Spleen (tissue), 13 donors: ENCODE measurements at regions of chr7 and their contacts with region 1.

Region 1: DNA sequence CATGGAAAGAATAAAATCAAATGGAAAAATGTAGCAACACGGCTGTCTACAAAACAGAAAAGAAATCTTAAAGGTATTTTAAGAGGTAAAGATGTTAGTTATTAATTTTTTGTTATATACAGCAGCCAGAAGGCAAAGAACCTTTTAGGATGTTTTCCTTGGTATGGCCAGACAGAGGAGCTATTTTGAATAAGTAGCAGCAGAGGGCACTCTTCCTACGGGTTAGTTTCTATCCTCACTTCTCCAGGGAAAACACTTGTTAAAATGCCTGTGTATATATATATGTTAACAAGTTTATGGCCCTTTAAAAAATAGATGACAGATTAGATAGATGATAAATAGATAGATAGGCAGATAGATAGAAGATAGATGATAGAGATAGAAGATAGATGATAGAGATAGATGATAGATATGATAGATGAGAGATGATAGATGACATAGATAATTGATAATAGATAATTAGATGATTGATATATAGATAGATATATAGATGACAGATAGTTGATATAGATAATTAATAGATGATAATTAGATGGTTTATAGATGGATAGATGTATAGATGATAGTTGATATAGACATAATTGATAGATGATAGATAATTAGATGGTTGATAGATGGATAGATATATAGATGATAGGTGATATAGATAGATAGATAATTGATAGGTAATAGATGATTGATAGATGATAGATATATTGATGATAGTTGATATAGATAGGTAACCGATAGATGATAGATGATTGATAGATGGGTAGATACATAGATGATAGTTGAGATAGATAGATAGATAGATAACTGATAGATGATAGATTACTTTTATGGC is 57.8 kb upstream of the WIPF3 start:
- DNase-seq: no peak
- H3K4me3 ChIP-seq: no peak overlapping the region
- H3K27ac ChIP-seq: peak overlapping the region in 1 of 8 donors; percentile 11
- H3K4me1 ChIP-seq: peaks cover 0 to 4% (median 0%) of the 10 kb centered on the region in 6 donors
- H3K27me3 ChIP-seq: peaks cover 0 to 4% (median 0%) of the 10 kb centered on the region in 7 donors
- CTCF ChIP-seq: peak in 7 of 11 experiments; percentile 23 to 59 (median 43)
- POLR2A ChIP-seq: no peak

Region 2: GRCh38 chr7:29649028-29649716 is 99.3 kb before region 1 on chr7:
- intact Hi-C with region 1: loop called (anchors 2 kb)
- DNase-seq: no peak
- H3K4me3 ChIP-seq: no peak overlapping the region
- H3K27ac ChIP-seq: no peak overlapping the region
- H3K4me1 ChIP-seq: no peaks in the 10 kb centered on the region
- H3K27me3 ChIP-seq: no peaks in the 10 kb centered on the region
- CTCF ChIP-seq: no peak
- POLR2A ChIP-seq: no peak

Region 3: GRCh38 chr7:29894256-29894655 is 145.8 kb after region 1 on chr7:
- intact Hi-C with region 1: no loop called
- DNase-seq: no peak
- H3K4me3 ChIP-seq: no peak overlapping the region
- H3K27ac ChIP-seq: no peak overlapping the region
- H3K4me1 ChIP-seq: no peaks in the 10 kb centered on the region
- H3K27me3 ChIP-seq: peaks cover 0 to 13% (median 0%) of the 10 kb centered on the region in 7 donors
- CTCF ChIP-seq: no peak
- POLR2A ChIP-seq: no peak

Region 4: GRCh38 chr7:29921404-29922010 is 173.0 kb after region 1 on chr7:
- intact Hi-C with region 1: loop called (anchors 10 kb)
- DNase-seq: no peak
- H3K4me3 ChIP-seq: no peak overlapping the region
- H3K27ac ChIP-seq: no peak overlapping the region
- H3K4me1 ChIP-seq: no peaks in the 10 kb centered on the region
- H3K27me3 ChIP-seq: peaks cover 0 to 2% (median 0%) of the 10 kb centered on the region in 7 donors
- CTCF ChIP-seq: peak in 10 of 11 experiments; percentile 60 to 87 (median 83)
- POLR2A ChIP-seq: no peak

Region 5: DNA sequence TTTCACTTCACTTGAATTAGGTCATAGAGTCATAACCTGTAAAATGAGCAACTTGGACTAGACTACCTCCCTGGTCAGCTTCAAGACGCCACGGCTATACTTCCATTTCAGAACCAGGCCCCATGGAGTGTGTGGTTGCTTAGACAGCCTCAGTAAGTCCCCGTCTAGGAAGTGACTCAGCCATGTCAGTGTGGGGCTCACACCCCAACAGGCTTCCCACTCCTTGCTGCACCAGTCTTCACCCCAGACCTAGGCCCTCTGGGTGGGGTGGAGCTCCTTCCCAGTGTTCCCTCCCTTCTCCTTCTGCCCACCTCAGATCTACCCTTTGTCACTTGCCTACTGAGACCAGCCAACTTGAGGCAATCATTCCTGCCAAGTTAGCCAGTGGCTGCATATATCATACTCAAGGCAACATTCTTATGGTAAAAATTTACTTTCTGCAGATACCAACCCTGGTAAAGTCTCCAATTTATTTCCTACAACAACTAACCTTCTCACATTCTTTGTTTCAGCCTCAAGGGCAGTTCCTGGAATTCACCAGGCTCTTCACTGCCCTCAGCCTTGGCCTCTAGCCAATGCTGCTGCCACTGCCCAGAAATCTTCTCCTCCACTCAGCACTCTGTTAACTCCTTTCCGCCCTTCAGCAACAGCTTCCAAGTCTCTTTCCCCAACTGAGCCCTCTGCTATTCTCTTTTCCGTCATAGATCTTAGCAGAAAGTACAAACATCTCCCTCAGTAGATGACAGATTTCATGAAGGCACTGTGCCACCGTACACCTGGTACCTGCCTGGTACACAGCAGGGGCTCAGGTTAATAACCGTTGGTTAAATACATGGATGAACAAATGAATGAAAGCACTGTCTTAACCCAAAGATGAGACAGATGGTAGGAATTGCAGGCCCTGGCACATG is 504.6 kb after region 1 on chr7:
- intact Hi-C with region 1: no loop called
- DNase-seq: no peak
- H3K4me3 ChIP-seq: no peak overlapping the region
- H3K27ac ChIP-seq: peak overlapping the region in 4 of 8 donors; percentile 9 to 33 (median 22)
- H3K4me1 ChIP-seq: peaks cover 0 to 38% (median 7%) of the 10 kb centered on the region in 6 donors
- H3K27me3 ChIP-seq: no peaks in the 10 kb centered on the region
- CTCF ChIP-seq: no peak
- POLR2A ChIP-seq: no peak

Region 6: GRCh38 chr7:30487371-30487770 is 738.9 kb after region 1 on chr7:
- intact Hi-C with region 1: no loop called
- DNase-seq: no peak
- H3K4me3 ChIP-seq: no peak overlapping the region
- H3K27ac ChIP-seq: no peak overlapping the region
- H3K4me1 ChIP-seq: no peaks in the 10 kb centered on the region
- H3K27me3 ChIP-seq: no peaks in the 10 kb centered on the region
- CTCF ChIP-seq: no peak
- POLR2A ChIP-seq: no peak